ENCODE measurements at regions of chr9 and their contacts with region 1.

Region 1: DNA sequence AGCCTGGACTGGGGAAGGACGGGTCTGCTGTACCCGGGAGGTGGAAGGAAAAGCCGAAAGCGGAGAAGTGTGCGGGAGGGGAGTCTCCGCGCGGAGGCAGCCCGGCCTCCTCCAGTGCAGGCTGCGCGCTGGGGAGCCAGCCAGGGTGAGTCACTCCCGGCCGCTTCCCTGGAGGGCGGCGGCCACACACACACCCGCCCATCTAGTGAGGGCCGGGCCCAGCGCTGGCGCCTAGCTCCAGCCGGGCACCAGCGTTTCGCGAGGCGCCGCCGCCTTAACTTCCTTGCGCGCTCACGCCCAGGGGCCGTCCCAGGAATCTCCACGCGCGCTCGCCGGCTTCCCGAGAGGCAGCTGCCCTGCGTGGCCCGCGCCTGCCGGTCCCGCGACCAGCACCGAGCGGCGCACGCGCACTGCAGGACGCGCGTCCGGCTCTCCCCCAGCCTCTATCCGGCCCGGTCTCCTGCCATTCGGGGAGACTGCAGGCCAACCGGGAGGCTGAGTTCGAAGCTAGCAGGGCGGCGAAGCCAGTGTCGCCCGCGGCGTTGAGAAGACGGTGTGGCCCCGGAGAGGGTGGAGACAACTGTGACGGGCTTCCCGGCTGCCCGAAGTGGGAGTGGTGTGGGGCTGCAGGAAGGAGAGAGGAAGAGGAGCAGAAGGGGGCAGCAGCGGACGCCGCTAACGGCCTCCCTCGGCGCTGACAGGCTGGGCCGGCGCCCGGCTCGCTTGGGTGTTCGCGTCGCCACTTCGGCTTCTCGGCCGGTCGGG is at the start of gene JAK2:
- DNase-seq: peak; percentile 79
- H3K4me3 ChIP-seq: peak within 1 kb of the TSS; percentile 79
- H3K27ac ChIP-seq: peak within 1 kb of the TSS; percentile 95
- H3K27me3 ChIP-seq: no peaks in the 10 kb centered on the region
- CTCF ChIP-seq: peak; percentile 42
- polyA plus RNA-seq, gene JAK2: 6.1 and 9.2 TPM in 2 replicates

Region 2: DNA sequence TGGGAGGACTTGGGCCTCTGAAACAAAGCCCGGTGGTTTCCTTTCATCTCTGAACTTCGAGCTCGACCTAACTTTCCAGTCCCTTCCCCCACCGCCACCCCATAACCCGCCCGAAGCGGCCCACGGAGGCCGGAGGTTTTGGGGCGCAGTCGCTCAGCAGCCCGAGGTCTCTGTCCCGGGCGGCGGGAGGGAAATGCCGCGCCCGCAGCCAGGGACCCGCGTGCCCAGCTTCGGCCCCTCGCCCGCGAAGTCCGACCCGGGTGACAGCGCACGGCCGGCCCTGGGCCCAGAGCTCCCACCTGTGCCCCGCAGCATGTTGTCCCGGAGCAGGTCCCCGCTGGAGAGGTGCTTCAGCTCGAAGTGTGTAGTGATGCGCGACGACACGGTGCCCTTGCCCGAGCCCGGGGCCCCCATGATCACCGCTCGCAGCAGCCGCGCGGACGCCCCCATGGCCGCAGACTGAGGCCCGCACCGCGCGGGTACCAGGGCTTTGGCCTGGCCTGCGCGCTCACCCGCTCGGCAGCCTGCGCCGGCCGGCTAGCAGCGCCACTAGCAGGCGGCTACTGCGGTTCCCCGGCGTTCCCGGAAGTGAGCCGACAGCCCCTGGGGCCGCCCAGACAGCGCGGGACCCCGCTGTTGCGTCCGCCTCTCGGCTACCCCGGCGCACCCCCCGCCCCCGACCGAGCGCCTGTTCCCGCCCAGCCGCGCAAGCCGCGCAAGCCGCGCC is 244.0 kb before region 1 on chr9 and contains the start of gene AK3:
- CTCF ChIA-PET with region 1: interaction called, 11 read pairs
- POLR2A ChIA-PET with region 1: no interaction called
- DNase-seq: peak; percentile 66
- H3K4me3 ChIP-seq: peak within 1 kb of the TSS; percentile 84
- H3K27ac ChIP-seq: peak within 1 kb of the TSS; percentile 39
- H3K27me3 ChIP-seq: no peaks in the 10 kb centered on the region
- CTCF ChIP-seq: peak; percentile 25; the same call in 1 of the 2 replicates
- polyA plus RNA-seq, gene AK3: 52.1 and 70.3 TPM in 2 replicates

Region 3: GRCh38 chr9:4750023-4750673 is 234.7 kb before region 1 on chr9:
- CTCF ChIA-PET with region 1: interaction called, 20 read pairs
- POLR2A ChIA-PET with region 1: no interaction called
- DNase-seq: peak; percentile 11
- H3K4me3 ChIP-seq: no peak overlapping the region
- H3K27ac ChIP-seq: no peak overlapping the region
- H3K27me3 ChIP-seq: no peaks in the 10 kb centered on the region
- CTCF ChIP-seq: peak; percentile 62

Region 4: GRCh38 chr9:4792572-4793458 is 192.0 kb before region 1 on chr9 and contains the start of gene RCL1:
- CTCF ChIA-PET with region 1: interaction called, 17 read pairs
- POLR2A ChIA-PET with region 1: interaction called, 9 read pairs
- DNase-seq: peak; percentile 80
- H3K4me3 ChIP-seq: peak within 1 kb of the TSS; percentile 94
- H3K27ac ChIP-seq: peak within 1 kb of the TSS; percentile 47
- H3K27me3 ChIP-seq: no peaks in the 10 kb centered on the region
- CTCF ChIP-seq: no peak
- polyA plus RNA-seq, gene RCL1: 7.0 and 7.8 TPM in 2 replicates

Region 5: GRCh38 chr9:4964540-4964939 is 20.3 kb before region 1 on chr9:
- CTCF ChIA-PET with region 1: no interaction called
- POLR2A ChIA-PET with region 1: no interaction called
- DNase-seq: no peak
- H3K4me3 ChIP-seq: no peak overlapping the region
- H3K27ac ChIP-seq: no peak overlapping the region
- H3K27me3 ChIP-seq: no peaks in the 10 kb centered on the region
- CTCF ChIP-seq: no peak

Region 6: GRCh38 chr9:5008202-5008601 is 23.4 kb after region 1 on chr9:
- CTCF ChIA-PET with region 1: interaction called, 13 read pairs
- POLR2A ChIA-PET with region 1: no interaction called
- DNase-seq: no peak
- H3K4me3 ChIP-seq: no peak overlapping the region
- H3K27ac ChIP-seq: no peak overlapping the region
- H3K27me3 ChIP-seq: no peaks in the 10 kb centered on the region
- CTCF ChIP-seq: no peak

Region 7: DNA sequence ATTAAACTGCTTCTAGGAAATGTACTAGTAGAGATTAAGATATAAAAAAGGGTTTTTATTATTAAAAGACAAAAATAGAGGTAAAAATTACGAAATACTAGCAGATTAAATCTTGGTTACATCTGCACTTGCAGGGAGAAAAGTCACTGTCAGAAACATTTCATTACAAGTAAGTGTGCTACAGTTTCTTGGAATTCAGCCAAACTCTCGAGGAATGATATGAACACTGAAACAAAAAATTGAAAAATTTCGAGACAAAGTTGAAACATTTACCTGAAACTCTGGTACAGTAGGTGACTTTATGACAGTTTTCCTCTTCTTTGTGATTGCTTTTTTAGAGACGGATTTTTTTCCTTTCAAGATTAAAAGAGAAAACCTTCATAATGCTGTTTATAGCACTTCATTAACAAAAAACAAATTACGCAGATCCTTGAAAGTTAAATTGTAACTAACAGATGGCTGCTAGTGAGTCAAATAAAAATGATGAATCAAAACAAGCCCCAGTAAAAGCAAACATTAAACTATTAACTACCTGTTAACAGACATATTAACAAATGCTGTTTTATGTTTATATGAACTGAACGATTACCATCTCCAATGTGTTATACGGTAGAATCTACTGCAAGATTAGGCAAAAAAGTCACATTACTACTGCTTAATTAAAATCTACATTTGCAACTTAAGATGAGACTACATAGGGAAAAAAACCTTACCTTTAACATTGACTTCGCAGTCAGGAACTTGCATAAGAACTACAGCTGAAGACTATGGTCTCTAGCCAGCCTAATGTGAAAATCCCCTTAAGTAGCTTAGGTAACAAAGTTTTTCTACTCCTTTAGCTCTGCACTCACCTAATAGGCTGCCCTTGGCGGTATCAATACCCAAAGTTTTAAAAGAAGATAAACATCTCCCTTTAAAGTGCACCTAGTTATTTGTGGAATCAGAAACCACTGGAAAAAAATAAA is 969.2 kb after region 1 on chr9:
- CTCF ChIA-PET with region 1: no interaction called
- POLR2A ChIA-PET with region 1: no interaction called
- DNase-seq: no peak
- H3K4me3 ChIP-seq: no peak overlapping the region
- H3K27ac ChIP-seq: no peak overlapping the region
- H3K27me3 ChIP-seq: no peaks in the 10 kb centered on the region
- CTCF ChIP-seq: no peak